ENCODE measurements at regions of chr20 and their contacts with region 1.

Region 1: DNA sequence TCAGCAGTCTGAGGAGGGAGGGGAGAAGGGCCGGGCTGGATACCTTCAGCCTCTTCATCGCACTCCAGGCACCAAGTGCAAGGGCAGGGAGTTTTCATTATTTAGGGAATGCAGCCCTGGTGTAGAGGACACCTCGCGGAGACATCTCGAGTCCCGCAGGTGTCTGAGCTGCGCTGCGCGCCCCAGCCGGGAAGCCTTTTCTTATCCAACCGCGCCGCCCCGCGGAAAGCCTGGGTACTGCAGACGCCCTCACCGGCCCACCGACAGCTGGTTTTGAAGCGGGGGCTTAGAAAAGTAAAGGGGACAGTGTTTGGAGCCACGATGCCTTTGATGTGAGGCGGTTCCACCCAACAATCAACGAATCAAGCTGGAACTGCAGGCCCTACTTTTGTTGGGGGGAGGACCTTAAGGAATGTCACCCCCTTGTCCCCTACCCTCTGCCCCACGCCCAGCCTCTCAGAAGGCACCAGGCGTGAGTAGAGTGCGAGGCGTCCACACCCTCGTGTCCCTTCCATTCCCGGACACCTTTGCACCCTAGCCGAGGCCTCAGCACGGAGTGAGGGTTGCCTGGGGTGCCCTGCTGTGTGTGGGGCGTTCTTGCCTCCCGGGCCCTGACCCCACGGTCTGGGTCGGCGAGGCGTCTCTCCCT is 8.6 kb downstream of the NKX2-2 start:
- DNase-seq: peak; percentile 94
- ATAC-seq: peak; percentile 47
- H3K4me3 Mint-ChIP-seq: peak overlapping the region; percentile 56
- H3K27ac Mint-ChIP-seq: no peak overlapping the region
- H3K4me1 Mint-ChIP-seq: peaks cover 37% of the 10 kb centered on the region
- H3K27me3 Mint-ChIP-seq: peaks cover 73% of the 10 kb centered on the region
- CTCF ChIP-seq: peak; percentile 99

Region 2: DNA sequence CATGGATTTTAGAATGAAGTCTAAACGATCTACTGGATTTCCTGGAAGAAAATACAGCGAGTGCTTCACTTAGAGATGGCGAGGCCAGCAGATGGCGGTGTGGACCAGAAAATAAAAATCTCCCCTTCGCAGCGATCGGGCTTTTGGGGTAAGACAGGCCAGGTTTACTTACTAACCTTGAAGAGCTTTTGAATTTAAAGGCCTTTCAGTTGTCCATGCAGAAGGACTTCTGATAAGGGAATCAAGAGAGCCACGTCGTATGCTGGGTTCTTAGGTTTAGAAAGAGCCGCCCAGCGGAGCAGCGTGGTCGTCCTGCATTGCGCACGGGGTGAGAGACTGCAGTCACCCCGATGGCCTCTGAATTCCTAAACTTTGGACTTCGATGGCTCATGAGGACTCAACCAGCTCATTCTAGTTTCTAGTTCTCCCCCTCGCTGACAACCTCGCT is 667.7 kb before region 1 on chr20:
- CTCF ChIA-PET with region 1: interaction called, 44 read pairs
- POLR2A ChIA-PET with region 1: no interaction called
- DNase-seq: peak; percentile 68
- ATAC-seq: peak; percentile 78
- H3K4me3 Mint-ChIP-seq: peak overlapping the region; percentile 46
- H3K27ac Mint-ChIP-seq: no peak overlapping the region
- H3K4me1 Mint-ChIP-seq: peaks cover 6% of the 10 kb centered on the region; the same call in 1 of the 2 replicates
- H3K27me3 Mint-ChIP-seq: peaks cover 3% of the 10 kb centered on the region
- CTCF ChIP-seq: peak; percentile 67

Region 3: DNA sequence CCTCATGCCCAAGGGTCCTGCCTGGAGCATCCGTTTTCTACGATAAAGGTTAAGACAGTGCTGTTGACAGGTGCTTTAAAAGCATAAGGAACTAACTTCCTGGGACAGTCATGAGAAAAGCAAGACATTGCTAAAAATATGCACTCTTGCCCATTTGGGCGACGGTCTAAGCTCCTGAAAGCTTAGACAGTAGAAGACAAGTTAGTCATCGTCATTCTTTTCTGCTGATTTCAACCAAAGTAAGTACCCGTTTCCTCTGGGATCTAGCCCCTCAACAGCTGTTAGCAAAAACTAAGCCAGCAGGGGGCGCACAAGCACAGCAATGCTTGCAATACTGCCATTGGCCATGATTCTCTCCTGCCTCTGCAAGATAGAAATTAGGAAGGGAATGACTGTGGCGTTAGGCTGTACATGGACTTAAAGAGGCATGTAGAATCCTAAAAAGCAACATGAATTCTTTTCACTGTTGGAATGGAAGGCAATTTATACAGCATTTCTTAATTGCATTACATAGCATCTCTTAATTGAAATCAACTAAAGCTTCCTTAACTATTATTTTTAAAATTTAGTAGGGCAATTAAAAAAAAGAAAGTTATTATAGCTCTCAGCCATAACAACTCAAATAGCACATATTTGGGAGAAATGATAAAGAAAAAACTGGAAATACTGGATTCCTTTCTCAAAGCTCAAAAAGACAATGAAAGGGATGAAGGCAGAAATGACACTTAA is 645.0 kb before region 1 on chr20:
- CTCF ChIA-PET with region 1: interaction called, 29 read pairs
- POLR2A ChIA-PET with region 1: no interaction called
- DNase-seq: peak; percentile 99
- ATAC-seq: peak; percentile 81
- H3K4me3 Mint-ChIP-seq: no peak overlapping the region
- H3K27ac Mint-ChIP-seq: no peak overlapping the region
- H3K4me1 Mint-ChIP-seq: no peaks in the 10 kb centered on the region; the same call in 1 of the 2 replicates
- H3K27me3 Mint-ChIP-seq: peaks cover 4% of the 10 kb centered on the region
- CTCF ChIP-seq: peak; percentile 80

Region 4: GRCh38 chr20:21099751-21100577 is 405.3 kb before region 1 on chr20:
- CTCF ChIA-PET with region 1: interaction called, 15 read pairs
- POLR2A ChIA-PET with region 1: no interaction called
- DNase-seq: peak; percentile 60
- ATAC-seq: no peak
- H3K4me3 Mint-ChIP-seq: peak overlapping the region; percentile 87
- H3K27ac Mint-ChIP-seq: peak overlapping the region; percentile 95
- H3K4me1 Mint-ChIP-seq: peaks cover 55% of the 10 kb centered on the region
- H3K27me3 Mint-ChIP-seq: peaks cover 85% of the 10 kb centered on the region
- CTCF ChIP-seq: no peak

Region 5: DNA sequence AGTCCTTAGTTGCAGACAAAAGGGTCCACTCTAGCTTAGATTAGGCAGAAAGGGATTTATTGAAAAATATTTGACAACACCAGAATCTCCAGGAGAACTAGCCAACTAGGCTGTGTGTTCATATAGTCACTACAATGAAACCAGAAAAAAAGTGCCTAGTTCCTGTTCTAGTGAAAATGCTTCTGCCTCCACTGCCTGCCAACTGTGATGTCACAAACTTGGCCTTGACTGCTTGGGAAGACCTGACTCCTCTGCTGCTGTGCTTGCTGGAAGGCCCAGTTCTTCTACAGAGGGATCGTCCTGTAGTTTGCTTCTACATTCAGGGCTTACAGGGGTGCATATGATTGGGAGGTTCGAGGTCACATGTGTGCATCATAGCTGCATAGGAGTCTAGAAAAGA is 242.5 kb before region 1 on chr20:
- CTCF ChIA-PET with region 1: no interaction called
- POLR2A ChIA-PET with region 1: no interaction called
- DNase-seq: no peak
- ATAC-seq: no peak
- H3K4me3 Mint-ChIP-seq: no peak overlapping the region
- H3K27ac Mint-ChIP-seq: no peak overlapping the region
- H3K4me1 Mint-ChIP-seq: 0 out of 2 replicates have a peak, but pooled peaks cover 3% of the 10 kb centered on the region
- H3K27me3 Mint-ChIP-seq: no peaks in the 10 kb centered on the region; the same call in 1 of the 2 replicates
- CTCF ChIP-seq: no peak

Region 6: DNA sequence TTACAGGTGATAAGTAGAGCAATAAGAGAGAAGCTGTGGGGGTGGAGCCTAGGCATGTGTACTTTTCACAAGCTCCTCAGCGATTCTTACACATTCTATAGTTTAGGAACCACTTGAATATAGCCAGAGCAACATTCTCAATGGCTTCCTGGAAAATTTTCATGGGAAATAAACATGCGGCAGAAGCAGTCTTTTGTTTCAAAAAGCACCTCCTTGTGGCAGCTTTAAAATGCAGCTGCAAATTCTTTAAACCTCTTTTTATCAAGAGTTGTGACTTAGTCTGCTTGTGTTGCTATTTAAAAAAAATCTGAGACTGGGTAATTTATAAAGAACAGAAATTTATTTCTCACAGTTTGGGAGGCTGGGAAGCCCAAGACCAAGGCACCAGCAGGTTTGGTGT is 15.2 kb before region 1 on chr20:
- CTCF ChIA-PET with region 1: interaction called, 21 read pairs
- POLR2A ChIA-PET with region 1: no interaction called
- DNase-seq: no peak
- ATAC-seq: no peak
- H3K4me3 Mint-ChIP-seq: no peak overlapping the region
- H3K27ac Mint-ChIP-seq: no peak overlapping the region
- H3K4me1 Mint-ChIP-seq: peaks cover 22% of the 10 kb centered on the region
- H3K27me3 Mint-ChIP-seq: no peaks in the 10 kb centered on the region
- CTCF ChIP-seq: no peak

Region 7: GRCh38 chr20:21571841-21572690 is 66.8 kb after region 1 on chr20:
- CTCF ChIA-PET with region 1: interaction called, 11 read pairs
- POLR2A ChIA-PET with region 1: no interaction called
- DNase-seq: peak; percentile 33
- ATAC-seq: peak; percentile 19; the same call in 1 of the 2 replicates
- H3K4me3 Mint-ChIP-seq: no peak overlapping the region
- H3K27ac Mint-ChIP-seq: no peak overlapping the region
- H3K4me1 Mint-ChIP-seq: peaks cover 37% of the 10 kb centered on the region
- H3K27me3 Mint-ChIP-seq: no peaks in the 10 kb centered on the region; the same call in 1 of the 2 replicates
- CTCF ChIP-seq: peak; percentile 97

Region 8: DNA sequence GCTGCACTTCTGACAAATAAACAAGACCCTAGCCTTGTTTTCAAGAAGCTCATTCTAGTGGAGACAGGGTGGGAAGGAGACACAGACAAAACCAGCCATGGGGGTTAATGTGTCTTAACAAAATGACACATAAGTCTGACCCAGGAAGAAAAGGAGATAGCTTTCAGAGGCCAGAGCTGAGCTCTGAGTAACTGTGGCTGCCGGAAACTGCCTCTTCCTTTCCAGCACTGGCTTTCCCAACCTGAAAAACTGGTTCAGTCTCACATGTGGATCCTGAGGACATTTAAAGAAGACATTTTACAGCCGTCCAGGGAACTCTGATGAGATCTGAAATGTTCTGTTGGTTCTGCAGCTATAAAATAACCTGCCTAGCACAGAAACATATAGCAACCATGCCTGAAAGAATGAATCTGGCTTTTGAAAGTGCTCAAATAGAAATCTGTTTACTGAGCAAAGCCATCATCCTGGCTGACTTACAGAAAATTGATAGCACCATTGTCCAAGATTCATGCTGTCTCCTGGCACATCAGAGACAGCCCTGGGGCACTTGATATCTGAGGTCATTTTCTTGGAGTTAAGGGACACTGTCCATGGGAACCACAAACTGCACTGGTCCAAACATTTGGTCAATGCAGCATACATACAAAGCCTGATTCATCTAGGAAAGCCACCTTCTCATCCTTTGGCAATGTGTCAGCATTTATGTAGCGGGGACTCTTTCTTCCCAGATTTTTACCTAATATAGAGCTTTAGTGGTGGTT is 117.0 kb after region 1 on chr20:
- CTCF ChIA-PET with region 1: no interaction called
- POLR2A ChIA-PET with region 1: no interaction called
- DNase-seq: no peak
- ATAC-seq: no peak
- H3K4me3 Mint-ChIP-seq: no peak overlapping the region
- H3K27ac Mint-ChIP-seq: no peak overlapping the region
- H3K4me1 Mint-ChIP-seq: peaks cover 5% of the 10 kb centered on the region; the same call in 1 of the 2 replicates
- H3K27me3 Mint-ChIP-seq: peaks cover 7% of the 10 kb centered on the region
- CTCF ChIP-seq: no peak

Measured in WTC11 (cell line).